ENCODE measurements at regions of chr16 and their contacts with region 1.

Region 1: GRCh38 chr16:12067714-12068401 is 91.3 kb downstream of the SNX29 start:
- DNase-seq: peak in 1 of 2 donors; percentile 46
- ATAC-seq: peak; percentile 80 to 84
- H3K4me3 ChIP-seq: no peak overlapping the region
- H3K27ac ChIP-seq: no peak overlapping the region
- H3K4me1 ChIP-seq: peaks cover 0 to 7% of the 10 kb centered on the region in 2 donors
- H3K27me3 ChIP-seq: no peaks in the 10 kb centered on the region
- CTCF ChIP-seq: peak; percentile 80 to 96 (median 91)
- POLR2A ChIP-seq: no peak

Region 2: GRCh38 chr16:11396241-11397048 is 671.4 kb before region 1 on chr16:
- in situ Hi-C with region 1: loop called in 1 of 4 experiments (anchors 25 kb)
- intact Hi-C with region 1: no loop called
- DNase-seq: peak; percentile 50 to 77
- ATAC-seq: peak; percentile 67 to 74
- H3K4me3 ChIP-seq: no peak overlapping the region
- H3K27ac ChIP-seq: peak overlapping the region in 2 of 4 donors; percentile 10 to 75
- H3K4me1 ChIP-seq: peaks cover 3 to 4% of the 10 kb centered on the region in 2 donors
- H3K27me3 ChIP-seq: no peaks in the 10 kb centered on the region
- CTCF ChIP-seq: peak; percentile 97 to 99 (median 98)
- POLR2A ChIP-seq: no peak

Region 3: GRCh38 chr16:11851294-11852091 is 216.4 kb before region 1 on chr16 and contains the start of gene RSL1D1:
- in situ Hi-C with region 1: loop called in 1 of 4 experiments (anchors 25 kb)
- intact Hi-C with region 1: loop called (anchors 10 kb)
- DNase-seq: peak; percentile 85 to 91
- ATAC-seq: peak; percentile 96
- H3K4me3 ChIP-seq: peak within 1 kb of the TSS; percentile 87 to 98 (median 92)
- H3K27ac ChIP-seq: peak within 1 kb of the TSS; percentile 95 to 98 (median 96)
- H3K4me1 ChIP-seq: peaks cover 35 to 39% of the 10 kb centered on the region in 2 donors
- H3K27me3 ChIP-seq: no peaks in the 10 kb centered on the region
- CTCF ChIP-seq: peak in 2 of 5 experiments; percentile 7 to 30
- POLR2A ChIP-seq: peak; percentile 98 to 99
- total RNA-seq, gene RSL1D1: 215 to 302 (median 259) TPM

Region 4: GRCh38 chr16:11949527-11949926 is 118.3 kb before region 1 on chr16:
- in situ Hi-C with region 1: no loop called
- intact Hi-C with region 1: loop called (anchors 1 kb)
- DNase-seq: peak in 1 of 2 donors; percentile 2
- ATAC-seq: peak in 1 of 2 donors; percentile 74
- H3K4me3 ChIP-seq: no peak overlapping the region
- H3K27ac ChIP-seq: no peak overlapping the region
- H3K4me1 ChIP-seq: no peaks in the 10 kb centered on the region
- H3K27me3 ChIP-seq: no peaks in the 10 kb centered on the region
- CTCF ChIP-seq: peak in 4 of 5 experiments; percentile 24 to 41 (median 26)
- POLR2A ChIP-seq: no peak

Region 5: DNA sequence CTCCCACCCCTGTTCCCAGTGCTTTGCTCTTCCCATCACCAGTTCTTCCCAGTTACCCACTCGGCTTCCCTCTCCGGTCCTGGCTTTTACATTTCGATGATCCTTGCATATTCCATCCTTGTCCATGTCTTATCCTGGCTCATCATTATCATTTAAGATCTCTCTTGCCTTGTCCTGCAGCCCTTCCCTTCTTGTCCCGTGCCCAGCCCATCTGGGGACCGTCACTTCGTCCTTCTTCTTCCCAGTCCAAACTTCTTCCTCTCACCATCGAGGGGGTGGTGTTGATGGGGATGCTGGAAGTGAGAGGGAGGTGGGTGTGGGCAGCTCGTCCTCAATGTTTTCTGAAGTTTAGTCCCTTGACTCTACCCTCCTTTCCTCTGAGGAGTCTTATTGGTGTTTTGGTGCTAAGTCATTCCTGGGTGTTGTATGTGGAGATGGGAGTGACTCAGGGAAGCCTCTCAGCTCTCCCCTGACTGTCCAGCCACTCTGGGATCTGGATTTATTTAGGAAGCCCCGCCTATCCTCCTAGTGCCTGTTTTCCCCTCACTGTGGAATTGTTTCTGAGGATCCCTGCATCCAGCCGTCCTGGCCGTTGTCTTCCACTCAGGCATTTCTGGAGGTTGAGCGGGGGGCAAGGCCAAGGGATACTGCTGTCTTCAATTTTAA is 90.3 kb before region 1 on chr16:
- in situ Hi-C with region 1: loop called in 3 of 4 experiments (anchors 5 to 10 kb)
- intact Hi-C with region 1: loop called (anchors 2 kb)
- DNase-seq: peak in 1 of 2 donors; percentile 43
- ATAC-seq: peak; percentile 54 to 59
- H3K4me3 ChIP-seq: peak overlapping the region; percentile 85 to 91 (median 88)
- H3K27ac ChIP-seq: peak overlapping the region; percentile 85 to 91 (median 89)
- H3K4me1 ChIP-seq: peaks cover 17 to 24% of the 10 kb centered on the region in 2 donors
- H3K27me3 ChIP-seq: no peaks in the 10 kb centered on the region
- CTCF ChIP-seq: no peak
- POLR2A ChIP-seq: peak; percentile 44 to 53

Region 6: GRCh38 chr16:11994143-11995119 is 73.4 kb before region 1 on chr16:
- in situ Hi-C with region 1: no loop called
- intact Hi-C with region 1: loop called (anchors 5 kb)
- DNase-seq: peak; percentile 19 to 31
- ATAC-seq: peak; percentile 49 to 54
- H3K4me3 ChIP-seq: no peak overlapping the region
- H3K27ac ChIP-seq: peak overlapping the region in 1 of 4 donors; percentile 35
- H3K4me1 ChIP-seq: peaks cover 14 to 23% of the 10 kb centered on the region in 2 donors
- H3K27me3 ChIP-seq: no peaks in the 10 kb centered on the region
- CTCF ChIP-seq: no peak
- POLR2A ChIP-seq: peak in 1 of 2 donors; percentile 10

Measured in gastrocnemius medialis (tissue), 4 donors.